ENCODE measurements at regions of chr4 and their contacts with region 1.

Region 1: GRCh38 chr4:140069066-140069465 is 84.9 kb downstream of the MAML3 start:
- DNase-seq: no peak
- ATAC-seq: no peak
- H3K4me3 ChIP-seq: no peak overlapping the region
- H3K4me3 Mint-ChIP-seq: no peak overlapping the region
- H3K27ac ChIP-seq: no peak overlapping the region
- H3K27ac Mint-ChIP-seq: no peak overlapping the region
- H3K4me1 ChIP-seq: peaks cover 18 to 22% of the 10 kb centered on the region in 2 donors
- H3K4me1 Mint-ChIP-seq: peaks cover 21% of the 10 kb centered on the region
- H3K27me3 ChIP-seq: no peaks in the 10 kb centered on the region
- H3K27me3 Mint-ChIP-seq: peaks cover 20% of the 10 kb centered on the region
- CTCF ChIP-seq: no peak

Region 2: DNA sequence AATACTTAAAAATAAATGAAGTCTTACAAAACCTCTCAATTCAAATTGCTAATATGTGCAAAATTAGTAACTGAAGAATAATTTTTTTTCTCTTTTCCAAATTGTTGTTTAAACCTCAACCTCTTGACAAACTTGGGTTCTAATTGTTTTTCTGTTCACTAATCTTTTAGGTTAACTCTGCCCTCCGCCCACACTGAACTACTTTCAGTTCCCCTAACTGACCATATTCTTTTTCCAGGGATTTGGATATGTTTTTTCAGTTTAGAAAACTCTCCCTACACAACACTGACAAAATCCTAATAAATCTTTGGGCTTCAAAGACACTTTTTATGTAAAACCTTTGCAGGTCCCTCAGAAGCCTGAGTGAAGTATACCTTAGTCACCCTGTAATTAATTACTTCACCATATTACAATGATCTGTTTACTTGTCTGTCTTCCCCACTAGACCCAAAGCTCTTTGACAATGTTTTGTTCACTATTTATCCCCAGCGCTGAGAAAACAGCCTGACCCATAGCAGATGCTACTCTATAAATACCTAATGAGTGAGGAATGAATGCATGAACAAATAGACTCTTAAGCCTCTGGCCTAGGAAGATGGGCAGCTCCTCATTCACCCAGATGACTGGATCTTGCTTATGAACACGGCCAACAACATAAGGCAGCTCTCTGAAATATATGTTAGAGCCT is 50.0 kb before region 1 on chr4:
- CTCF ChIA-PET with region 1: no interaction called
- POLR2A ChIA-PET with region 1: no interaction called
- intact Hi-C with region 1: loop called (anchors 5 kb)
- DNase-seq: no peak
- ATAC-seq: no peak
- H3K4me3 ChIP-seq: no peak overlapping the region
- H3K4me3 Mint-ChIP-seq: no peak overlapping the region
- H3K27ac ChIP-seq: no peak overlapping the region
- H3K27ac Mint-ChIP-seq: no peak overlapping the region
- H3K4me1 ChIP-seq: peaks cover 0 to 5% of the 10 kb centered on the region in 2 donors
- H3K4me1 Mint-ChIP-seq: peaks cover 11% of the 10 kb centered on the region
- H3K27me3 ChIP-seq: no peaks in the 10 kb centered on the region
- H3K27me3 Mint-ChIP-seq: peaks cover 3% of the 10 kb centered on the region
- CTCF ChIP-seq: no peak

Measured in B cell (primary cell).